HepG2 (cell line): ENCODE measurements at regions of chr6 and their contacts with region 1.

Region 1: DNA sequence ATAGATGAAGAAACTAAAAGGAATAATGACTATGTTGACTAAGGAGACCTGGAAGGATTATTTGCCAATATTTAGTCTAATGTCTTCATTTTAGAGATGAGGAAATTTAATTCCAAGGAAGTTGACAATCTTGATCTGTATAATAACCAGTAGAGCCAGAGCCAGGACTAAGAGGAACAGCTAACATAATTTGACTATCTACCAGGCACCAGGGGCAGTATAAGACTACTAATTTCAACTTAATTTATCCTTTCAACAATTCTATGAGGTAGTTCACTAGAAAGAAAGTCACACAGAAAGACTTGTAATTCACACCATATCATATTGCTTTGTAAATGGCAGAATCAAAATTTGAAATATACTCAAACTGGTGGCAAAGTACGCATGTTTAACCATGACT is 273.0 kb upstream of the STXBP5 start:
- DNase-seq: peak; percentile 21
- ATAC-seq: peak; percentile 56; the same call in 2 of the 3 replicates
- H3K4me3 ChIP-seq: no peak overlapping the region
- H3K27ac ChIP-seq: no peak overlapping the region
- H3K4me1 ChIP-seq: no peaks in the 10 kb centered on the region
- H3K27me3 ChIP-seq: no peaks in the 10 kb centered on the region; a peak in 1 of 5 replicates
- CTCF ChIP-seq: no peak
- EP300 ChIP-seq: no peak
- POLR2A ChIP-seq: no peak
- RAD21 ChIP-seq: no peak

Region 2: GRCh38 chr6:146819596-146820320 is 111.5 kb before region 1 on chr6:
- CTCF ChIA-PET with region 1: no interaction called
- POLR2A ChIA-PET with region 1: no interaction called
- in situ Hi-C with region 1: no loop called
- intact Hi-C with region 1: no loop called
- DNase-seq: no peak
- ATAC-seq: no peak
- H3K4me3 ChIP-seq: no peak overlapping the region
- H3K27ac ChIP-seq: no peak overlapping the region
- H3K4me1 ChIP-seq: no peaks in the 10 kb centered on the region
- H3K27me3 ChIP-seq: no peaks in the 10 kb centered on the region
- CTCF ChIP-seq: no peak
- EP300 ChIP-seq: no peak
- POLR2A ChIP-seq: no peak
- RAD21 ChIP-seq: no peak

Region 3: GRCh38 chr6:147222160-147222838 is 291.1 kb after region 1 on chr6:
- CTCF ChIA-PET with region 1: interaction called, 4 read pairs
- POLR2A ChIA-PET with region 1: no interaction called
- in situ Hi-C with region 1: no loop called
- intact Hi-C with region 1: loop called (anchors 10 kb)
- DNase-seq: peak; percentile 30
- ATAC-seq: peak; percentile 81
- H3K4me3 ChIP-seq: no peak overlapping the region
- H3K27ac ChIP-seq: no peak overlapping the region
- H3K4me1 ChIP-seq: no peaks in the 10 kb centered on the region
- H3K27me3 ChIP-seq: no peaks in the 10 kb centered on the region
- CTCF ChIP-seq: peak; percentile 27; the same call in 1 of the 2 replicates
- EP300 ChIP-seq: no peak
- POLR2A ChIP-seq: no peak
- RAD21 ChIP-seq: peak; percentile 25; the same call in 1 of the 2 replicates

Region 4: DNA sequence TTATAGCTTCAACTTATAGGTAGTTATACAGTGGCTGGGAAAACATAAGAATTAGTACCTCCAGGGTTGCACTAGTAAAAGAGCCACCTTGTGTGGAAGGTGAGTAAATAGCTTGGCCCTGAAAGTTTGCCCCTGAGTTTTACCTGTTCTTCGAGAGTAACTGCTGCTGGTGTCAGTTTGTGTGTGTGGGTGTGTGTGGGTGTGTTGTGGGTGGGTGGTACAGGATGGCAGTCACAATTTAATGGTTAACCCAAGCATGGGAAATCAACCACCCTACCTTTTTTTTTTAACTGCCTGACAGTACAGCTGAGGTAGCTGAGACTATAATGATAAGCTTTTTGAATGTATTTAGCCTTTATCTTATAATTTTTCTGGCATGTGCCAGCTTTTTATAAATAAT is 410.3 kb after region 1 on chr6:
- CTCF ChIA-PET with region 1: no interaction called
- POLR2A ChIA-PET with region 1: no interaction called
- in situ Hi-C with region 1: no loop called
- intact Hi-C with region 1: no loop called
- DNase-seq: no peak
- ATAC-seq: no peak
- H3K4me3 ChIP-seq: no peak overlapping the region
- H3K27ac ChIP-seq: no peak overlapping the region
- H3K4me1 ChIP-seq: no peaks in the 10 kb centered on the region
- H3K27me3 ChIP-seq: no peaks in the 10 kb centered on the region
- CTCF ChIP-seq: no peak
- EP300 ChIP-seq: no peak
- POLR2A ChIP-seq: no peak
- RAD21 ChIP-seq: no peak

Region 5: DNA sequence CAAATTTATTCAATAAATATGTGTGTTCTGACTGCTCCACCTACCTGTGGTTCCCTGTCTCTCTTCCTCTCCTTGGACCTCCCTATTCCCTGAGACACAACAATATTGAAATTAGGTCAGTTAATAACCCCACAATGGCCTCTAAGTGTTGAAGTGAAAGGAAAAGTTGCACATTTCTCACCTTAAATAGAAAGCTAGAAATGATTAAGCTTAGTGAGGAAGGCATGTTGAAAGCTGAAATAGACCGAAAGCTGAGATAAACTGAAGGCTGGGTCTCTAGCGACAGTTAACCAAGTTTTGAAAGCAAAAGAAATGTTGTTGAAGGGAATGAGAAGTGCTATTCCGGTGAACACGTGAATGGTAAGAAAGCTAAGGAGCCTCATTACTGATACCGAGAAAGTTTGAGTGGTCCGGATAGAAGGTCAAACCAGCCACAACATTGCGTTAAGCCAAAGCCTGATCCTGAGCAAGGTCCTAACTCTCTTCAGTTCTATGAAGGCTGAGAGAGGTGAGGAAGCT is 1849.8 kb after region 1 on chr6:
- CTCF ChIA-PET with region 1: no interaction called
- POLR2A ChIA-PET with region 1: no interaction called
- in situ Hi-C with region 1: no loop called
- intact Hi-C with region 1: loop called (anchors 5 kb)
- DNase-seq: no peak
- ATAC-seq: no peak
- H3K4me3 ChIP-seq: no peak overlapping the region
- H3K27ac ChIP-seq: no peak overlapping the region
- H3K4me1 ChIP-seq: no peaks in the 10 kb centered on the region
- H3K27me3 ChIP-seq: peaks cover 0 to 14% of the 10 kb centered on the region in 2 experiments; a peak in 2 of 5 replicates
- CTCF ChIP-seq: no peak
- EP300 ChIP-seq: no peak
- POLR2A ChIP-seq: no peak
- RAD21 ChIP-seq: no peak